A673 (cell line): ENCODE measurements at regions of chr22 and their contacts with region 1.

Region 1: GRCh38 chr22:20298803-20299735 is 20.8 kb downstream of the DGCR6L start:
- DNase-seq: peak; percentile 94
- H3K4me3 ChIP-seq: peak overlapping the region; percentile 54
- H3K27ac ChIP-seq: no peak overlapping the region
- H3K4me1 ChIP-seq: no peaks in the 10 kb centered on the region
- H3K27me3 ChIP-seq: no peaks in the 10 kb centered on the region
- CTCF ChIP-seq: no peak

Region 2: GRCh38 chr22:20319745-20320658 is 20.9 kb after region 1 on chr22 and contains the start of gene DGCR6L:
- CTCF ChIA-PET with region 1: interaction called, 4 read pairs
- POLR2A ChIA-PET with region 1: no interaction called
- intact Hi-C with region 1: loop called (anchors 1 kb)
- DNase-seq: peak; percentile 98
- H3K4me3 ChIP-seq: peak within 1 kb of the TSS; percentile 95
- H3K27ac ChIP-seq: peak within 1 kb of the TSS; percentile 96
- H3K4me1 ChIP-seq: peaks cover 3% of the 10 kb centered on the region
- H3K27me3 ChIP-seq: no peaks in the 10 kb centered on the region
- CTCF ChIP-seq: no peak
- total RNA-seq, gene DGCR6L: 50.7 and 59.7 TPM in 2 replicates